Transverse colon (tissue), 4 donors: ENCODE measurements at regions of chr10 and their contacts with region 1.

Region 1: DNA sequence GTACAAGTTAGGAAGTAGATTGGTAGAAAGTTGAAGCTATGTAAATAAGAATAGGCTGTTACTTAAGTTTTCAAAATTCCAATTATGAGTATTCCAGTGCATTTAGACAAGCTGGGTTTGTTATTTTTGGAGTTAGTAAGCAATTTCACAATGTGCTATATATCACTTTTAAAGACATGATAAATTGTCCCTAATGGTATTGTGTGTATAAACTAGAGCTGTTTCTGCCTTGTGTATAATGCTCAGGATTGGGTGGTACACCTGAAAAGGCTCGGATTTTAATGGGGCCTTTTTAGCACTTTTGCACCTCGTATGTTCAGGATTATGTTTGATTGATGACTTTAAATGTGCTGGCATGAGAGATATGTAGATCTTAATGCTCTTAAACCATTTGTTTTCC is 175.8 kb downstream of the VTI1A start:
- DNase-seq: no peak
- H3K4me3 ChIP-seq: no peak overlapping the region
- H3K27ac ChIP-seq: peak overlapping the region in 1 of 4 donors; percentile 49
- H3K4me1 ChIP-seq: peaks cover 0 to 8% (median 0%) of the 10 kb centered on the region in 4 donors
- H3K27me3 ChIP-seq: no peaks in the 10 kb centered on the region
- CTCF ChIP-seq: no peak
- EP300 ChIP-seq: no peak
- POLR2A ChIP-seq: no peak

Region 2: GRCh38 chr10:111933917-111934316 is 688.9 kb before region 1 on chr10:
- in situ Hi-C with region 1: no loop called
- intact Hi-C with region 1: loop called (anchors 5 kb)
- DNase-seq: no peak
- H3K4me3 ChIP-seq: no peak overlapping the region
- H3K27ac ChIP-seq: no peak overlapping the region
- H3K4me1 ChIP-seq: no peaks in the 10 kb centered on the region
- H3K27me3 ChIP-seq: no peaks in the 10 kb centered on the region
- CTCF ChIP-seq: no peak
- EP300 ChIP-seq: no peak
- POLR2A ChIP-seq: no peak

Region 3: DNA sequence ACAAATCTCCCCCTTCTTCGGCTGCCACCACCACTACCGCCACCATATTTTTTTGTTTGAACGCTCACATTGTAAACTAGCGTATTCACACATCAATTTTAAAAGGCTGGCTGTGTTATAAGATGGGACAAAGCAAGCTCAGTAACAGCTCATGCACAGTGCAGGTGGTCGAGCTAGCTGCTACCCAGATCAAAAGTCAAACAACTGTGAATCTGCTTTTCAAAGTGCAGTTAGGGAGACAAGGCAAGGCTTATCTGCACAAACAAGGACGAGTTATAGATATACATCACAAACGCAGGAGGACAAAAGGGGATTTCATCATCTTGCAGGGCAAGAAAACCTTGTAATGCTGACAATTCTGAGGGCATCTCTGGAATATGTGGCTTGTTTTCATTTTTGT is 55.8 kb after region 1 on chr10:
- in situ Hi-C with region 1: no loop called
- intact Hi-C with region 1: no loop called
- DNase-seq: no peak
- H3K4me3 ChIP-seq: no peak overlapping the region
- H3K27ac ChIP-seq: no peak overlapping the region
- H3K4me1 ChIP-seq: no peaks in the 10 kb centered on the region
- H3K27me3 ChIP-seq: no peaks in the 10 kb centered on the region
- CTCF ChIP-seq: no peak
- EP300 ChIP-seq: no peak
- POLR2A ChIP-seq: no peak